ENCODE measurements at regions of chr10 and their contacts with region 1.

Region 1: DNA sequence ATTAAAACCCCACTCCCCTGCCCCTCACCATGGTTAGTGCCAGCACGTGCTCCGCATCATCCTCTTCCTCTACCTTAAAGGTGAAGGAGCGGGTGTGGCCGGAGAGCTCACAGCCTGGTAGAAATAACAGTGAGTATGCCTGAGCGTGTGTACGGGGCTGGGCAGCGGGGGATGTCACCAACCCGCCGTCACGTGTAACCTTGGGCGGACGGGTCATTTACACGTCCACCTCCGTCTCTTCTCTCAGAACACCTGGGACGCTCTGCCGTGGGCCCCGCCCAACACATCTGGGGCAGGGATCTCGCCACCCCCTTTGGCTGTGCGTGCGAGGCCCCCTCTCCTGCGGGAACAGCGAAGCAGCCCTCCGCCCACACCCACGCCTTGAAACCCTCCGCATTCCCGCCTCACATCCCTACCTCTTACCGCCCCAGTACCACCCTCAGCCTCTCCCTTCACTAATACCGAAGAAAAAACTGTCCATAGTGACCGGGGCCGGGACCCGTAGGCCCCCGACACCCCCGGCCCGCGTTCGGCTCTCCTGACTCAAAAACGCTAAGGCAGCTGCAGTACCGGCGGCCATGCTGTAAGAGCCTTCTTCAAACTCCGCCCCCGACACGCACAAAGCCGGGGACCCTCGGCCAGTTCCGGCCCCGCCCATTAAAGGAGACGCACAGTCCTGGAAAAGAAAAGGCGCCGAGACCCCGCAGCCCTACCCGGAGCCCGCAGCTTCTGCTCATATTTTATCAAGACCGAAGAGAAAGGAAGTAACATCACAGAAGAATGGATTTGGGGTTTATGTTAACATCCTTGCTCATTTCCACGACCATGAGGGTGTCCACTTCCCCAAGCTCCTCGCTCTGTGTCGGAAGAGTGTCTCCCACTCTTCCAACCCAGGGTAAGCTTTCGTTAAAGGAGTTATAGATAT is at the start of gene NPM3:
- DNase-seq: peak; percentile 81
- H3K4me3 ChIP-seq: peak within 1 kb of the TSS; percentile 68 to 73 (median 71)
- H3K27ac ChIP-seq: peak within 1 kb of the TSS; percentile 27
- H3K4me1 ChIP-seq: peaks cover 26% of the 10 kb centered on the region
- H3K27me3 ChIP-seq: peaks cover 5 to 10% of the 10 kb centered on the region in 2 experiments
- CTCF ChIP-seq: no peak
- POLR2A ChIP-seq: peak; percentile 72
- total RNA-seq, gene NPM3: 55.4 and 60.7 TPM in 2 replicates

Region 2: DNA sequence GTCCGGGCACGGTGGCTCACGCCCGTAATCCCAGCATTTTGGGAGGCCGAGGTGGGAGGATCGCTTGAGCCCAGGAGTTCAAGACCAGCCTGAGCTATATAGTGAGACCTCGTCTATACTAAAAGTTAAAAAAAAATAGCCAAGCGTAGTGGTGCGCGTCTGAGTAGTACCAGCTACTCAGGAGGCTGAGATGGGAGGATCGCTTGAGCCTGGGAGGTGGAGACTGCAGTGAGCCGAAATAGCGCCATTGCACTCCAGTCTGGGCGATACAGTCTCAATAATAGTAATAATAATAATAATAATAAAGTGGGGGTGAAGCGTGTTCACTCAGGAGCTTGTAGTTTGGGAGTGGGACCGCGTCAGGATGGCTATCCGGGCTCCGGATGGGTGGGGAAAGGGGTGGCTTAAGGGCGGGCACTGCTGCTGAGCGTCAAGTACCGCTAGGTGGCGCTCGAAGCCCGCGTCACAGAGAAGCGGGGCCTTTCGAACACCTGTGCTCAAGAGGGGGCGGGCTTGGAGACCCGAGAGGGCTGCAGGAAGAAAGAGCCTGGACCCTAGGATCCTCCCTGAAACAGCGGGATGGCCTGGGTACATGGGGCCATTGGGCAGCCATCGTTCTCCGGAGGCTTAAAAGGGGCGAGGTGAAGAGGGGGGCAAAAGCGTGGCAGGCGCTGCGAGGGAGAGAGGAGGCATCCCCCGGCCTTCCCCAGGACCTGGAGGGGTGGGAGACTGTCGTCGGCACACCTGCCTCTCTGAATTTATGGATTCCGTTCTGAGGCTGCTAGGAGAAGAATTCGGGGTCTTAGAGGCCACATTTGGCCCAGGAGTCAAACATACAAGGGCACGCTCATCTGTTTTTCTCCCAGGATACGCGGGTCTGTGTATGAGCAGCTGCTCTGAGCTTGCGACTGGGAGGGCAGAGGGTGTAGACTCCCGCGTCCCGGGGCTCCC is 568.4 kb before region 1 on chr10:
- CTCF ChIA-PET with region 1: interaction called, 60 read pairs
- POLR2A ChIA-PET with region 1: interaction called, 3 read pairs
- dilution Hi-C with region 1: no loop called
- intact Hi-C with region 1: loop called (anchors 1 kb)
- DNase-seq: peak; percentile 44
- H3K4me3 ChIP-seq: no peak overlapping the region
- H3K27ac ChIP-seq: no peak overlapping the region
- H3K4me1 ChIP-seq: no peaks in the 10 kb centered on the region
- H3K27me3 ChIP-seq: peaks cover 68 to 71% of the 10 kb centered on the region in 2 experiments
- CTCF ChIP-seq: peak; percentile 85 to 94
- POLR2A ChIP-seq: no peak

Region 3: GRCh38 chr10:101569838-101570766 is 213.0 kb before region 1 on chr10:
- CTCF ChIA-PET with region 1: interaction called, 15 read pairs
- POLR2A ChIA-PET with region 1: no interaction called
- dilution Hi-C with region 1: no loop called
- intact Hi-C with region 1: no loop called
- DNase-seq: peak; percentile 62
- H3K4me3 ChIP-seq: peak overlapping the region in 2 of 3 experiments; percentile 18 to 39
- H3K27ac ChIP-seq: no peak overlapping the region
- H3K4me1 ChIP-seq: peaks cover 7% of the 10 kb centered on the region
- H3K27me3 ChIP-seq: peaks cover 26 to 27% of the 10 kb centered on the region in 2 experiments
- CTCF ChIP-seq: peak; percentile 46 to 90
- POLR2A ChIP-seq: no peak

Region 4: DNA sequence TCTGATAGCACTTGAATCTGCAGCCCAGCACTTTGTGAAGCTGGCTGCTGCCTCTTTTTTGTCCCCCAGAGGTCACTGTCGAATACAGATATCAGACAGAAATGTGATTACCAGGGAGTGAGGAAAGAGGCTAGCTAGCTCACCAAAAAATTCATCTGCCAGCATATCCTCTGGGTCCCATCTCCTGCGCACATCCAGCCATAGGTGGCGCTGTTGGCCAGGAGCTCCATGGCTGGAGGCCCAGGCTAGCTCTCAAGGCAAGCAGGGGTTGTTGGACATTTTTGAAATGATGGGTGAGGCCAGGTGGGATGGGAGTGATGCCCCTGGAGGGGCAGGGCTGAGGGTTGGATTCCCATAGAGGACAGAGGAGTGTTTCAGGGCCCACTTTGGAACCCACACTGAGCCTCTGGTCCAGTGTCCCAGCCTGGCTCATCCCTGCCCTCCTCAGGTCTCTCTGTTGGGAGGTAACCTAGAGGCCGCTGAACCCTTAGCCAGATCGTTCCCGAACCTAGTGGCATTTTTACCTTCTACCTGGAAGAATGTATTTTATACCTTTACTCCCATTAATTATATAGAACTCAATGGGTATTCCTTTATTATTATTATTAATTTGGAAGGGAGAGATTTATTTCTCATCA is 180.2 kb before region 1 on chr10:
- CTCF ChIA-PET with region 1: interaction called, 193 read pairs
- POLR2A ChIA-PET with region 1: no interaction called
- dilution Hi-C with region 1: no loop called
- intact Hi-C with region 1: loop called (anchors 1 kb)
- DNase-seq: peak; percentile 56
- H3K4me3 ChIP-seq: no peak overlapping the region
- H3K27ac ChIP-seq: no peak overlapping the region
- H3K4me1 ChIP-seq: no peaks in the 10 kb centered on the region
- H3K27me3 ChIP-seq: no peaks in the 10 kb centered on the region
- CTCF ChIP-seq: peak; percentile 82 to 95
- POLR2A ChIP-seq: no peak

Region 5: GRCh38 chr10:101769541-101770180 is 13.4 kb before region 1 on chr10:
- CTCF ChIA-PET with region 1: interaction called, 18 read pairs
- POLR2A ChIA-PET with region 1: interaction called, 4 read pairs
- dilution Hi-C with region 1: no loop called
- intact Hi-C with region 1: no loop called
- DNase-seq: no peak
- H3K4me3 ChIP-seq: no peak overlapping the region
- H3K27ac ChIP-seq: no peak overlapping the region
- H3K4me1 ChIP-seq: no peaks in the 10 kb centered on the region
- H3K27me3 ChIP-seq: peaks cover 74% of the 10 kb centered on the region in 2 experiments
- CTCF ChIP-seq: no peak
- POLR2A ChIP-seq: no peak

Region 6: GRCh38 chr10:101818119-101818871 is 35.2 kb after region 1 on chr10 and contains the start of gene OGA:
- CTCF ChIA-PET with region 1: interaction called, 11 read pairs
- POLR2A ChIA-PET with region 1: interaction called, 4 read pairs
- dilution Hi-C with region 1: no loop called
- intact Hi-C with region 1: loop called (anchors 5 kb)
- DNase-seq: peak; percentile 100
- H3K4me3 ChIP-seq: peak within 1 kb of the TSS; percentile 82 to 99 (median 90)
- H3K27ac ChIP-seq: peak within 1 kb of the TSS; percentile 83
- H3K4me1 ChIP-seq: peaks cover 19% of the 10 kb centered on the region
- H3K27me3 ChIP-seq: no peaks in the 10 kb centered on the region
- CTCF ChIP-seq: no peak
- POLR2A ChIP-seq: peak; percentile 87
- total RNA-seq, gene OGA: 113 and 118 TPM in 2 replicates